ENCODE measurements at regions of chr16 and their contacts with region 1.

Region 1: GRCh38 chr16:57462209-57462977 is at the start of gene POLR2C:
- DNase-seq: peak; percentile 92
- H3K4me3 ChIP-seq: peak within 1 kb of the TSS; percentile 93
- H3K27ac ChIP-seq: peak within 1 kb of the TSS; percentile 73
- H3K4me1 ChIP-seq: no peaks in the 10 kb centered on the region
- H3K27me3 ChIP-seq: no peaks in the 10 kb centered on the region
- CTCF ChIP-seq: peak; percentile 98
- total RNA-seq, gene POLR2C: 96.2 and 110 TPM in 2 replicates

Region 2: DNA sequence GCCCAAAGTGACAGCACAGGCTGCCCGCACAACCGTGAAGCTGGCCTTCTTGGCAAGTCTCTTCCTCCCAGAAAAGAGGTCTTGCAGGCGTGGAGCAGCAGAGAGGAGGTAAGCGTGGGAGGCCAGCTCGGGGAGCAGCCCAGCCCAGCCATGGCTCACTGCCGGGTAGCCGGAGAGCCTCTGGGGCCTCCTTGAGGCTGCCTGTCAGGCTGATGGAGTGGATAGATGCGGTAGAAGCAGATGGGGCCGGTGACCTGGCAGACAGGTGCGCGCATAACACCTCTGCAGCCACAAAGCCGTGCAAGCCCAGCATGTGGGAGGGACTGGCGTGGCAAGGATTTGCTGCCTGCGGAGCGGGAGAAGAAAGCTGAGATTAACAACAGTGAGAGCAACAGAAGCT is 41.0 kb after region 1 on chr16:
- CTCF ChIA-PET with region 1: no interaction called
- POLR2A ChIA-PET with region 1: no interaction called
- intact Hi-C with region 1: no loop called
- DNase-seq: no peak
- H3K4me3 ChIP-seq: no peak overlapping the region
- H3K27ac ChIP-seq: no peak overlapping the region
- H3K4me1 ChIP-seq: no peaks in the 10 kb centered on the region
- H3K27me3 ChIP-seq: no peaks in the 10 kb centered on the region
- CTCF ChIP-seq: no peak

Region 3: DNA sequence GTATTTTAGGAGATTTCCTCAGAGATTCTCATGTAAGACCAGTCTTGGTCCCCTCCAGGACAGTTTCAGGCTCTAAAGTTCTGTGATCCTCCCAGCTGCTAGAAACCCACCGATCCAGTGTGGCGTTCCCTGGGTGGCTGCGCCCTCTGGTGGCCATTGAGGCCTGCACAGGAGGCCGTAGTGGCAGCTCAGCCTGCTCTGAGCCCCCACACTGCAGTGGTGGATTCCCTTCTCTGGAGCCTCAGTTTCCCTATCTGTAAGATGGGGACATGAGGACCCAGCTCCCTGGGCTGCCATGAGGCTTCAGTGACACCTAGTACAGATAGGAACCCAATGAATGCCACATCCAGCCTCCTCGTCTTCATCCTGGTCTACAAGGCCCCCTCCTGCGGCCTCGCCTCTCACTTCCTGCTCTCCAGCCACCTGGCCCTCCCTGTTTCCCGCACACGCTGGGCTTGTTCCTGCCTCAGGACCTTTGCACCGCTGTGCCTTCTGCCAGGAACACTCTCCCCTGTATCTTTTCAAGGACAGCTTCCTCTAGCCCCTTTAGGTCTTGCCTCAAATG is 57.5 kb after region 1 on chr16:
- CTCF ChIA-PET with region 1: interaction called, 5 read pairs
- POLR2A ChIA-PET with region 1: no interaction called
- intact Hi-C with region 1: loop called (anchors 2 kb)
- DNase-seq: peak; percentile 80
- H3K4me3 ChIP-seq: no peak overlapping the region
- H3K27ac ChIP-seq: no peak overlapping the region
- H3K4me1 ChIP-seq: no peaks in the 10 kb centered on the region
- H3K27me3 ChIP-seq: no peaks in the 10 kb centered on the region
- CTCF ChIP-seq: peak; percentile 98

Region 4: DNA sequence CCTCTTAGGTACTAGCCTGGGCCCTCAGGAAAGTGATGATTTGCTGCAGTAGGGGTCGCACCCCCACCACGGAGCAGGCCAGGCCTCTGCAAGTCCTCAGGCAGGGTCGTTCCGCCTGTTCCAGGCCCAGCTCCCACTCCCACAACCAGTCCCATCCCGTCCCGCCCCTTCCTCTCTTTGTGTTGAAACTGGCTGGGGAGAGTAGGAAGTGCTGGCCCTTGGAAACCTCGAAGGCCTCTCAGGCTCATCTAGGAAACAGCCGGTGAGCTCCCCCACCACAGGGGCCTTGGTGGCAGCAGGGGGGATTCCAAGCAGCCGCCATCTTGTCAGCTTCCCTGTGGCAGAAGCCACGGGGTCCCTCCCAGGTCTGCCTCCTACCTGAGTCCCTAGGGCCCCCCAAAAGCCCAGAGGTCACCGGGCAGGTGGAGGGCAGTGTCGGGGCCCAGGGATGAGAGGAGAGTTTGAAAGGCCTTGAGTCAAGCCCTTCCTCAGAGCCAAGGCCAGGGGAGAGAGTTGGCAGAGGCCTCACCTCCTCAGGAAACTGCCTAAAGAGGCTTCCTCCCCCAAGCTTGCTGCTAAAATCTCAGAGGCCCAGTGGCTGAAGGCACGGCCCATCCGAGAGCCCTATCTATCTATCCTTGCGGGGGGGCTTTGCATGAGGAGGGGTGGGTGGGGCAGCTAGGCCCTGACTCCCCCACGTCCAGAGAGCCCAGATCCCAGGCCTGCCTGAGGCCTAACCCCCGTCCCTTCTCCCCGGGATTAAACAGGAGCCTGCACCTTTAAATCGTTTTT is 585.4 kb after region 1 on chr16:
- CTCF ChIA-PET with region 1: no interaction called
- POLR2A ChIA-PET with region 1: no interaction called
- intact Hi-C with region 1: no loop called
- DNase-seq: no peak
- H3K4me3 ChIP-seq: no peak overlapping the region
- H3K27ac ChIP-seq: no peak overlapping the region
- H3K4me1 ChIP-seq: no peaks in the 10 kb centered on the region
- H3K27me3 ChIP-seq: no peaks in the 10 kb centered on the region
- CTCF ChIP-seq: no peak